PC-3 (cell line): ENCODE measurements at regions of chr7 and their contacts with region 1.

Region 1: GRCh38 chr7:75776295-75776971 is 4.4 kb upstream of the CCL26 start:
- DNase-seq: peak; percentile 94
- ATAC-seq: peak; percentile 92
- H3K4me3 ChIP-seq: no peak overlapping the region
- H3K27ac ChIP-seq: peak overlapping the region; percentile 68
- H3K4me1 ChIP-seq: peaks cover 23% of the 10 kb centered on the region
- H3K27me3 ChIP-seq: no peaks in the 10 kb centered on the region
- CTCF ChIP-seq: no peak

Region 2: DNA sequence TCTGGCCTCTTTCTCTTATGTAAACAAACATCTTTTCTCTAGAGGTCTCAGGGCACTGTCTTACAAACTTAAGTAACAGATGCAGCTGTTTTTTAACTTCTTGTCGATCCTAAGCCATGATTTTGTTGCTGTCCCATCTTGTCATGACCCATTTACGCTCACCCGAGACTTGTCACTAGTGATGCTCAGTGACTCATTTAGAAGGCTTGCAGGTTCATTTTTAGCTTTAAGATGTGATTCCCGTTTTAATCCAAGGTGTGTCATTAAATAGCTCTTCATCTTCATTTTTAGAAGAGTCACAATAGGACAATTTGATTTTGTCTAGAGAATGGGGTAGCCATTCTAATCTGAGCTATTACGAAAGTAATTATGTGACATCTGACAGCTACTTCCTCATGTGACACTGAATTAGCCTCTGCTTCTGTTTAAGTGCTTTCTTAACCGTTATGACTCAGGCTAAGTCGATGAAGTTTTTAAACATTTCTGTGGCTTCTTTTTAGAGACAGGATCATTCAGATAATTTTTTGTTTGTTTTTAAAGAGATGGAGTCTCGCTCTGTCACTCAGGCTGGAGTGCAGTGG is 241.6 kb before region 1 on chr7:
- CTCF ChIA-PET with region 1: no interaction called
- POLR2A ChIA-PET with region 1: no interaction called
- intact Hi-C with region 1: no loop called
- DNase-seq: peak; percentile 47
- ATAC-seq: peak; percentile 78
- H3K4me3 ChIP-seq: no peak overlapping the region
- H3K27ac ChIP-seq: no peak overlapping the region
- H3K4me1 ChIP-seq: peaks cover 10% of the 10 kb centered on the region
- H3K27me3 ChIP-seq: no peaks in the 10 kb centered on the region
- CTCF ChIP-seq: no peak

Region 3: DNA sequence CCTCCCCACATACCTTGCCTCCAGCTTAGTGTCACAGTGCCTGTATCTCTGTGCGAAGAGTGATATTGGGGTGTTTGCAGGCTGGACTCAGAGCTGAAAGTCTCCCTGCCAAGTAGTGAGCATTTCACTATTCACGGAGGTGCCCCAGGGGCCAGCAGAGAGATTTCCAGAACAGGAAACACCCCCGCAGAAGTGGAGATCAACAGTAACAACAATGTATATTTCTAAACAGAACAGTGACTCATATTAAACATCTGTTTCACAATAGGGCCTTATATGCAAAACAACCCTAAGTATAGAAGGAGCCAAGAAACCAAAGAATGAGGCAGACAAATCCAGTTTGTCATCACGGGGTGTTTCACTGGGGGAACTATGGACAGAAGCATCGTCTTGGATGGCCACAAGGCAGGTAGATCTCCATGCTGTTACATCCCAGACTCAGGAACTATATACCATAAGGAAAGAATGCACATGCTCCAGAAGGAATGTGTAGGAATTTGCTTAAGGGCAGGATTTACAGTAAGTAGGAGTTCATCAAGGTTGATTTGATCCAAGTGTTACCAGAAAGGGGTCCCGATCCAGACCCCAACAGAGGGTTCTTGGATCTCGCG is 66.5 kb after region 1 on chr7:
- CTCF ChIA-PET with region 1: no interaction called
- POLR2A ChIA-PET with region 1: no interaction called
- intact Hi-C with region 1: loop called (anchors 1 kb)
- DNase-seq: peak; percentile 84
- ATAC-seq: peak; percentile 92
- H3K4me3 ChIP-seq: peak overlapping the region; percentile 11; the same call in 1 of the 2 replicates
- H3K27ac ChIP-seq: peak overlapping the region; percentile 55
- H3K4me1 ChIP-seq: peaks cover 15% of the 10 kb centered on the region
- H3K27me3 ChIP-seq: no peaks in the 10 kb centered on the region
- CTCF ChIP-seq: no peak

Region 4: GRCh38 chr7:75878769-75879611 is 102.6 kb after region 1 on chr7 and contains the start of gene RHBDD2:
- CTCF ChIA-PET with region 1: no interaction called
- POLR2A ChIA-PET with region 1: no interaction called
- intact Hi-C with region 1: loop called (anchors 5 kb)
- DNase-seq: peak; percentile 93
- ATAC-seq: peak; percentile 98
- H3K4me3 ChIP-seq: peak within 1 kb of the TSS; percentile 89
- H3K27ac ChIP-seq: 0 out of 2 replicates have a peak within 1 kb of the TSS, but pooled peaks have one; percentile 2
- H3K4me1 ChIP-seq: peaks cover 13% of the 10 kb centered on the region
- H3K27me3 ChIP-seq: no peaks in the 10 kb centered on the region
- CTCF ChIP-seq: no peak
- total RNA-seq, gene RHBDD2: 42.7 and 59.1 TPM in 2 replicates

Region 5: GRCh38 chr7:75945297-75946168 is 169.1 kb after region 1 on chr7:
- CTCF ChIA-PET with region 1: no interaction called
- POLR2A ChIA-PET with region 1: no interaction called
- intact Hi-C with region 1: loop called (anchors 10 kb)
- DNase-seq: peak; percentile 46
- ATAC-seq: peak; percentile 60
- H3K4me3 ChIP-seq: no peak overlapping the region
- H3K27ac ChIP-seq: peak overlapping the region; percentile 26; the same call in 1 of the 2 replicates
- H3K4me1 ChIP-seq: peaks cover 26% of the 10 kb centered on the region
- H3K27me3 ChIP-seq: no peaks in the 10 kb centered on the region
- CTCF ChIP-seq: no peak